Cardiac septum (tissue), 1 donor: ENCODE measurements at regions of chr7 and their contacts with region 1.

Region 1: DNA sequence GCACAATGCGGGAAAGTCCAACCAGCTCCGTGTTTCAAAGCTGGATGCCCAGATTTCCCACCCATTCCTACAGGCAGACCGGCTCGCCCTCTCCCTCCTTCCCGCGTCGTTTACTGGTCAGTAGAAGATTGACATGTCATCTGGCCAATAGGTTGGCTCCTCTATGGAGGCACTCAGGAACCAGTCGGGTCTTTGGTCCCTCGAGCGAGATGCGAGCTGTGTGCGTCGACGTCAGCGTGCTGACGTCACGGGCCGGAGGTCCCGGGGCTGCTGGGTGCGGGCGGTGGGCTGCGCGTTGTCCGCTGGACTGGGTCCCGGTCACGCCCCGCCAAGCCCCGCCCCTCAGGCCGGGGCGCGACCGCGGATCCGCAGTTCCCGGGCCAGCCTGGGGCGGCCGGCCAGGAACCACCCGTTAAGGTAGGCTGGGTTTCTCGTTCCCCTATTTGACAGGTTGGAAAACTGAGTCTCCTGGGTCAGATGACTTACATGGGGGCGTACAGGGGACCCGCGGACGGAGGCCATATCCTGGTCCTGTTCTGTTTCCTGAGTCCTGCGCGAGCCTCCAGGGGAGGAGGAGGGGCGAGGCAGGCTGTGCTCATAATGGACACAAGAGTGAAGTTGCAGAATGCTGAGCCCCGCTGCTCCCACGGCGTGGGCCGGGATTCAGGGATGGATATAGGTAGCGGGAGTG is at the start of gene STARD3NL:
- DNase-seq: peak; percentile 96
- total RNA-seq, gene STARD3NL: 26.4 TPM

Region 2: GRCh38 chr7:37916673-37917660 is 261.2 kb before region 1 on chr7 and contains the start of gene SFRP4:
- intact Hi-C with region 1: loop called (anchors 5 kb)
- DNase-seq: peak; percentile 80
- total RNA-seq, gene SFRP4: 15.0 TPM

Region 3: DNA sequence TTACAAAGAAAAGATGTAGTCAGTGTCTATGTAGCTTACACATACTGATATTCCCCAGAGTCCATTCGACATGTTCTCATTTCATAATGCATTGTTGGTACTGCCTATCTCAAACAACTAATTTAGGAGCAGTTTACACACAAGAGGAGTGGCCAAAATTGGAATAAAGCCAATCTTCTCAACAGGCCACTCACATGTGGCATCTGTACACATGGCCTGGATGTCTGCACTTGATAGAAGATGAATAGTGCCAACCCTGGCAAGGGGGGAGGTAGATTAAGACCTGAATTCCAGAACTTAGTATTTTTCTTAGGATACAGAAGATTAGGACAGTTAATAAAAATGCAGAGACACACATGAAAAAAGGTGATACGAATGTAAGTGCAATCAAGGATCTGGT is 125.4 kb before region 1 on chr7:
- intact Hi-C with region 1: no loop called
- DNase-seq: no peak

Region 4: DNA sequence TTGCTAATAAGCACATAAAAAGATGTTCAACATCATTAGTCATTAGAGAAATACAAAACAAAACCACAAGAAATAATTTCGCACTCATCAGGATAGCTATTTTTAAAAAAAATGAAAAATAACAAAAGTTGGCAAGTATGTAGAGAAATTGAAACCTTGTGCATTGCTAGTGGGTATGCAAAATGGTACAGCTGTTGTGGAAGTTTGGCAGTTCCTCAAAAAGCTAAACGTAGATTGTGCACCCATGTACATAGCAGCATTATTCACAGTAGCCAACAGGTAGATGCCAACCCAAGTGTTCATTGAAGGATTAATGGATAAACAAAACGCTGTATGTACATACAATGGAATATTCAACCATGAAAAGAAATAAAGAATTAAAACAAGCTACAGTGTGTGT is 35.4 kb before region 1 on chr7:
- intact Hi-C with region 1: no loop called
- DNase-seq: no peak